Body of pancreas (tissue), 4 donors: ENCODE measurements at regions of chrX and their contacts with region 1.

Region 1: GRCh38 chrX:130975947-130976346 is 72.9 kb upstream of the ENOX2 start:
- DNase-seq: peak; percentile 18 to 61 (median 38)
- ATAC-seq: peak; percentile 53
- H3K4me3 ChIP-seq: no peak overlapping the region
- H3K27ac ChIP-seq: no peak overlapping the region
- H3K4me1 ChIP-seq: no peaks in the 10 kb centered on the region
- H3K27me3 ChIP-seq: no peaks in the 10 kb centered on the region
- CTCF ChIP-seq: peak in 6 of 7 experiments; percentile 4 to 67 (median 38)
- POLR2A ChIP-seq: no peak

Region 2: GRCh38 chrX:130793966-130794365 is 182.0 kb before region 1 on chrX:
- intact Hi-C with region 1: no loop called
- DNase-seq: peak in 1 of 4 donors; percentile 1
- ATAC-seq: no peak
- H3K4me3 ChIP-seq: no peak overlapping the region
- H3K27ac ChIP-seq: no peak overlapping the region
- H3K4me1 ChIP-seq: no peaks in the 10 kb centered on the region
- H3K27me3 ChIP-seq: no peaks in the 10 kb centered on the region
- CTCF ChIP-seq: no peak
- POLR2A ChIP-seq: no peak

Region 3: DNA sequence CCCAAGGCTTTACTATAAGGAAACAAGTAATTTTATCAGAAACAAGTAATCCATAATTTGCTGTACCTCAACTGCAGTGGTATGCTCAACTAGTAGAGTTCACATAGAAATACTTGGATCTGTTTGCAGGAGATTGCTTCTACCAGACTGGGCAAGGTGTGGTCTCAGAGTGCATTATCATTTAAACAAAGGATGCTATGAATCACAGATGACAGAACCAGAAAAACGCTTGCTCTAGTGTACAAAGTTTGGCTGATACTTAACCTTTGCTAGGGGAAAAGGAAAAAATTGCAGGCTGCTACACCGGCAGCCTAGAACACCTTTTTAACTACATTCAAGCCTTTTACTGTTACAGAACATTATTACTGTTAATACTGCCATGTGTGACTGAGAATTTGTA is 170.0 kb before region 1 on chrX:
- intact Hi-C with region 1: no loop called
- DNase-seq: no peak
- ATAC-seq: no peak
- H3K4me3 ChIP-seq: no peak overlapping the region
- H3K27ac ChIP-seq: no peak overlapping the region
- H3K4me1 ChIP-seq: no peaks in the 10 kb centered on the region
- H3K27me3 ChIP-seq: no peaks in the 10 kb centered on the region
- CTCF ChIP-seq: no peak
- POLR2A ChIP-seq: no peak

Region 4: GRCh38 chrX:131633285-131633917 is 657.5 kb after region 1 on chrX:
- intact Hi-C with region 1: loop called (anchors 10 kb)
- DNase-seq: peak; percentile 48 to 73 (median 62)
- ATAC-seq: peak; percentile 40
- H3K4me3 ChIP-seq: no peak overlapping the region
- H3K27ac ChIP-seq: no peak overlapping the region
- H3K4me1 ChIP-seq: no peaks in the 10 kb centered on the region
- H3K27me3 ChIP-seq: no peaks in the 10 kb centered on the region
- CTCF ChIP-seq: peak; percentile 43 to 80 (median 59)
- POLR2A ChIP-seq: no peak